ENCODE measurements at regions of chr17 and their contacts with region 1.

Region 1: DNA sequence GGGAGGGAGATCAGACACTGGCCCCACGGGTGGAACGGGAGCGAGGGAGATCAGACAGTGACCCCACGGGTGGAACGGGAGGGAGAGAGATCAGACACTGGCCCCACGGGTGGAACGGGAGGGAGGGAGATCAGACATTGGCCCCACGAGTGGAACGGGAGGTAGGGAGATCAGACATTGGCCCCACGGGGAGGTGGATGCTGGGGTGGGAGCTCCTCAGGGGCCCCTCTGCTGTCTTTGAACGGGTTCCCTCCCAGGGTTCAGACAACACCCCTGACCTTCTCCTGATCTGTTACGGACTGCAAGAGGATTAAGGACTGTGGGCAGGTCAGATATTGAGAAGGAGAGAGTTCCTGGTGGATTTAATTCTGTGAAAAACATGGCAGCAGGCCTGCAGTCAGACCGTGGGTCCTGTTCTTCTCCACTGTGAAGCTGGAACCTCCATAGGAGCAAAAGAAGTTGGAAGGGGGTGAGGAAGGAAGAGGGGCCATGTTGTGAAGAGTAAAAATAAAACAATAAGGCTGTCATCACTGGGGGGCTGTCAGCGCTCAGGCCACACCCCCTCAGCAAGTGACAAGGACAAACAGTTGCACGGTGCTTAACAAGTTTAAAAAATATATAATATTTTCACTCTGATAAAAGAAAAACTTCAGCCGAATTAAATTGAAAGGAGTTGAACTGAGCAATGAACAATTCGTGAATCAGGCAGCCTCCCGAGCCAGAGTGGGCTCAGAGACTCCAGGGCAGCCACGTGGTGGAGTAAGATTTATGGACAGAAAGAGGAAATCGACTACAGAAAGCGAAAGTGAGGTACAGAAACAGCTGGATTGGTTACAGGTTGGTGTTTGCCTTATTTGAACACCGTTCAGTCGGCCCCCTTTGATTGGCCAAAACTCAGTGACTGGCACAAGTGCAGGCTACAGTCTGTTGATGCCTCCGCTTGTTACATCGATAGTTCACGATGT is 348.7 kb upstream of the TNRC6C start:
- DNase-seq: peak; percentile 44 to 89 (median 74)
- ATAC-seq: peak; percentile 98 to 99
- H3K4me3 Mint-ChIP-seq: peak overlapping the region; percentile 61 to 89 (median 82)
- H3K27ac Mint-ChIP-seq: peak overlapping the region; percentile 91 to 99 (median 96)
- H3K4me1 Mint-ChIP-seq: peaks cover 27 to 38% (median 34%) of the 10 kb centered on the region in 4 donors
- H3K27me3 Mint-ChIP-seq: no peaks in the 10 kb centered on the region

Region 2: GRCh38 chr17:77619851-77620250 is 10.0 kb after region 1 on chr17:
- POLR2A ChIA-PET with region 1: interaction called, 15 read pairs
- DNase-seq: no peak
- ATAC-seq: no peak
- H3K4me3 Mint-ChIP-seq: no peak overlapping the region
- H3K27ac Mint-ChIP-seq: no peak overlapping the region
- H3K4me1 Mint-ChIP-seq: peaks cover 17 to 28% (median 21%) of the 10 kb centered on the region in 4 donors
- H3K27me3 Mint-ChIP-seq: no peaks in the 10 kb centered on the region

Region 3: GRCh38 chr17:77645072-77646045 is 35.5 kb after region 1 on chr17:
- POLR2A ChIA-PET with region 1: interaction called, 15 read pairs
- DNase-seq: peak; percentile 28 to 82 (median 70)
- ATAC-seq: peak; percentile 90 to 95
- H3K4me3 Mint-ChIP-seq: peak overlapping the region; percentile 74 to 90 (median 84)
- H3K27ac Mint-ChIP-seq: peak overlapping the region; percentile 89 to 98 (median 97)
- H3K4me1 Mint-ChIP-seq: peaks cover 18 to 42% (median 29%) of the 10 kb centered on the region in 4 donors
- H3K27me3 Mint-ChIP-seq: no peaks in the 10 kb centered on the region

Region 4: DNA sequence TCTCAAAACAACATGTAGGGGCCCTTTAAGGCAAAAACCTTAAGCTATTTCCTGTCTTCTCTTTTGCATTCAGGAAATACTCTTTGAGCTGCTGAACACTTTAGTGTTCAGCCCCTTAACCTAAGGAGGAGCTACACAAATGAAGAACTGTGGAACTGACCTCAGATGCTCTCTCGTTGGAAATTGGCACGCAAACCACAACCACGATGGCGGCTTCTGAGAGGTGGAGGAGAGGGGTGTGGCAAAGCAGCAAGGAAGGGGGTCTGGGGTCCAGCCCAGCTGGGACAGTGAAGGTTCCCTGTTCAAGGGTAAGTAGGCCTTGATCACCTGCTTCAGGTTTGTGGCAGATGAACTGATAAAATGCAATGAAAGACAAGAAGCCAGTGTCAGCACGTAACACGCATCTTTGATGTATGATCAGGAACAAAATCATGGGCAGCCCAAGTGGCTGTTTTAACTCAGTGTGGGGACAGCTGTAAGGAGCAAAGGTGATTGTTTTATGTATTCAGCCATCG is 57.1 kb after region 1 on chr17:
- POLR2A ChIA-PET with region 1: interaction called, 21 read pairs
- DNase-seq: peak; percentile 43 to 87 (median 76)
- ATAC-seq: peak; percentile 90 to 91
- H3K4me3 Mint-ChIP-seq: peak overlapping the region; percentile 88 to 98 (median 94)
- H3K27ac Mint-ChIP-seq: peak overlapping the region; percentile 94 to 99 (median 98)
- H3K4me1 Mint-ChIP-seq: peaks cover 32 to 67% (median 52%) of the 10 kb centered on the region in 4 donors
- H3K27me3 Mint-ChIP-seq: no peaks in the 10 kb centered on the region

Region 5: GRCh38 chr17:78206298-78206697 is 596.5 kb after region 1 on chr17:
- POLR2A ChIA-PET with region 1: no interaction called
- DNase-seq: no peak
- ATAC-seq: no peak
- H3K4me3 Mint-ChIP-seq: no peak overlapping the region
- H3K27ac Mint-ChIP-seq: no peak overlapping the region
- H3K4me1 Mint-ChIP-seq: no peaks in the 10 kb centered on the region
- H3K27me3 Mint-ChIP-seq: no peaks in the 10 kb centered on the region